Astrocyte of the cerebellum (primary cell): ENCODE measurements at regions of chr5 and their contacts with region 1.

Region 1: GRCh38 chr5:133839721-133840120 is 128.7 kb downstream of the C5orf15 start:
- DNase-seq: no peak
- H3K4me3 ChIP-seq: no peak overlapping the region
- CTCF ChIP-seq: no peak

Region 2: DNA sequence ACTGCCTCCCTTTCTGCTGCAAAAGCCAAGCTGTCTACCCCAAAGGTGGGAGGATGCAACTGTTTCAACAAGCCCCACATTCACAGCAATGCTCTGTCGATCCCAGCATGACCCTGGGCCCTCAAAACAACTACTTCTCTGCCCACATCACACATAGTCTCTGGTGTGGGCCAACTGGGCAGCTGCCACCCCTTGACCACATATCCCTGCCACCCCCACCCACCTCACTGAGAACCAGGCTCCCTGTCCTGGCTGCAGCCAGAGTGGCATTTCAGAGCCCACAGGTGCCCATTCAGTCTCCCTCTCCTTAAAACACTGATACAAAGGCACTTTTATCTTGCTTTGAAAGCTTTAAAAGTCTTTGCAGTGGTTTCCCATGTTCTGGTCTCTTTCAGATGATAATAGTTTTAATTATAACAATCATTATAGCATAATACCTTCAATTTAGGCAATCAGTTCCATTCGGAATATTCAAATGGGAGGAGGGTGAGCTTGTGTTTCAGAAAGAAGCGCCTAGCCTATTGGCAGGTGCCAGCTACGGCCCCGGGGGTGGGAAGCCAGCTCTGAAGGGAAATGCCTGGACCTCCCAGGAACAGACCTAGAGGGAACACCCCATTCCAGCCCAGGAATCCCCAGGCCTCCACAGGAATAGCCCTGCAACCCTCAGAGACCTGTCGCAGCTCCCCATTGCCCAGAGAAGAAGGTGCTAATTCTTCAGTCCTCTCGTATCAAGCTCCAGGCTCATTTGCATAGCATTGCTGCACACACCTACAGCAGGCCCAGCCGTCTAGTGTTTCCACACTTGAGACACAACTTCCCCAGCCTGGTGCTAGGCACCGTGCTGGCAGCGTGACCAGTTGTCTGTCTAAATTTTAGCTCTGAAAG is 37.9 kb after region 1 on chr5:
- in situ Hi-C with region 1: no loop called
- DNase-seq: no peak
- H3K4me3 ChIP-seq: no peak overlapping the region
- CTCF ChIP-seq: no peak

Region 3: DNA sequence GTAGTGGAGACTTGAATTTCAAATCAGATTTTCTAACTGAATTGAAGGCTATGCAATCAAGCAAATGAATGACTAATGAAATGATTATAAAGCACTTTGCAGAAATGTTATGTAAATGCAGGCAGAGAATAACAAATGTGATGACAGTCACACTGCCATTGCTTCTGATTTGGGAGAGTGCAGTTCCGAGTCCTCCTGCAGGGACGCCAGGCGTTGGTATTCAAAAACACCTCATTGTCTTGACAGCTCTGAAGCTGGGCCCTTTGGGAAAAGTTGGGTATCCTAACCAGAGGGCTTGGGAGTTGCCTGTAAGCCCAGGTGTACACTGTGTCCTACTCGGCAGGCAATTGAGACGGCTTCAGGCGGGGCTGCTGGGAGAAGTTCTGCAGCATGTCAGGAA is 70.8 kb after region 1 on chr5:
- in situ Hi-C with region 1: loop called (anchors 5 kb)
- DNase-seq: no peak
- H3K4me3 ChIP-seq: no peak overlapping the region
- CTCF ChIP-seq: no peak